A549 (cell line): ENCODE measurements at regions of chr4 and their contacts with region 1.

Region 1: DNA sequence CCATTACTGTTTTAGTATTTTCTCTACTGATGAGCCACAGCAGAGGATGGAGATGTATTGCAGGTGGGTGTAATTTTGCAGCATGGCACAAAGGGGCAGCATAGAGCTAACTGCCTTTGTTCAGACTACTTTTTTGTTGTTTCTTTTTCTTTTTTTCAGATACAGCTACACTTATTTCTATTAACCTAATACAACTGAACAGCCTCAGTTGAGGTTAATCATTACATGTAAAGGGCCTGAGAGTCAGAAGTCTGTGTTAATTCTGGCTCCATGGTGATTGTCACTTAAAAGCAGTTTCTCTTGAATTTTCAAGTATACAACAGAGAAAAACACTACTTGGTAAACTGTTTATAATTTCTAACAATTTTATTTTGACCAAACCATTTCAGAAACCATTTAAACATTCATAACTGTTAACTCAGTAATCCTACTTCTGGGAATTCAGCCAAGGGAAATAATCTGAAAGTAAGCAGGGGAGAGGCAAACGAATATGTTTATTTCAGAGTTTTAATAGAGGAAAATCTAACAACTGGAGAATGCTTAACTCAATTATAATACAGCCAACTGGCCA is 13.9 kb upstream of the PPEF2 start:
- DNase-seq: peak; percentile 44 to 47
- ATAC-seq: peak; percentile 88
- H3K4me3 ChIP-seq: no peak overlapping the region
- H3K27ac ChIP-seq: no peak overlapping the region
- H3K4me1 ChIP-seq: peaks cover 6% of the 10 kb centered on the region
- CTCF ChIP-seq: peak; percentile 72
- EP300 ChIP-seq: no peak
- POLR2A ChIP-seq: no peak
- RAD21 ChIP-seq: peak; percentile 48 to 62; a peak in 4 of 5 replicates

Region 2: DNA sequence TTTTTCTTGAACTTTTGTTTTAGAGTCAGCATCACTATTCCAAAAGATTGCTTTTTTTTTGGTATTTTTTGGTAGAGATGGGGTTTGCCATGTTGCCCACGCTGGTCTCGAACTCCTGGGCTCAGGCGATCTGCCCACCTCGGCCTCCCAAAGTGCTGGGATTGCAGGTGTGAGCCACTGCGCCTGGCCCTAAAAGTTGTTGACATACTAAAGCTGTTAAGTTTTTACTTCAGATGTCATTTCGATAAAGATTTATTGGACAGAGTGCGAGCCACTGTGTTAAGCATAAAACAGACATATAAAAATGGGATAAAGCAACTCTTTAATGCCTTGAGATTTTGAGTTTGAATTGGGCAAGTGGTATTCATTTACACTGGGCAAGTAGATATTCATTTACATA is 163.5 kb before region 1 on chr4:
- CTCF ChIA-PET with region 1: no interaction called
- POLR2A ChIA-PET with region 1: no interaction called
- DNase-seq: no peak
- ATAC-seq: no peak
- H3K4me3 ChIP-seq: no peak overlapping the region
- H3K27ac ChIP-seq: no peak overlapping the region
- H3K4me1 ChIP-seq: no peaks in the 10 kb centered on the region
- CTCF ChIP-seq: no peak
- EP300 ChIP-seq: no peak
- POLR2A ChIP-seq: no peak
- RAD21 ChIP-seq: no peak

Region 3: GRCh38 chr4:75895744-75896314 is 20.3 kb before region 1 on chr4:
- CTCF ChIA-PET with region 1: interaction called, 10 read pairs
- POLR2A ChIA-PET with region 1: no interaction called
- DNase-seq: peak; percentile 15 to 27
- ATAC-seq: peak; percentile 47 to 84; a peak in 4 of 6 replicates
- H3K4me3 ChIP-seq: no peak overlapping the region
- H3K27ac ChIP-seq: no peak overlapping the region
- H3K4me1 ChIP-seq: no peaks in the 10 kb centered on the region
- CTCF ChIP-seq: peak; percentile 57
- EP300 ChIP-seq: no peak
- POLR2A ChIP-seq: no peak
- RAD21 ChIP-seq: peak; percentile 29 to 46; a peak in 3 of 5 replicates

Region 4: GRCh38 chr4:75940692-75941253 is 24.6 kb after region 1 on chr4 and contains the start of gene NAAA:
- CTCF ChIA-PET with region 1: interaction called, 23 read pairs
- POLR2A ChIA-PET with region 1: no interaction called
- DNase-seq: peak; percentile 66 to 83
- ATAC-seq: peak; percentile 93
- H3K4me3 ChIP-seq: peak within 1 kb of the TSS; percentile 77
- H3K27ac ChIP-seq: peak within 1 kb of the TSS; percentile 88 to 92
- H3K4me1 ChIP-seq: peaks cover 6% of the 10 kb centered on the region; the same call in 1 of the 3 replicates
- CTCF ChIP-seq: peak; percentile 34
- EP300 ChIP-seq: no peak
- POLR2A ChIP-seq: peak; percentile 55
- RAD21 ChIP-seq: peak; percentile 5 to 14; a peak in 1 of 5 replicates
- polyA plus RNA-seq, gene NAAA: 29.3 and 31.8 TPM in 2 replicates

Region 5: DNA sequence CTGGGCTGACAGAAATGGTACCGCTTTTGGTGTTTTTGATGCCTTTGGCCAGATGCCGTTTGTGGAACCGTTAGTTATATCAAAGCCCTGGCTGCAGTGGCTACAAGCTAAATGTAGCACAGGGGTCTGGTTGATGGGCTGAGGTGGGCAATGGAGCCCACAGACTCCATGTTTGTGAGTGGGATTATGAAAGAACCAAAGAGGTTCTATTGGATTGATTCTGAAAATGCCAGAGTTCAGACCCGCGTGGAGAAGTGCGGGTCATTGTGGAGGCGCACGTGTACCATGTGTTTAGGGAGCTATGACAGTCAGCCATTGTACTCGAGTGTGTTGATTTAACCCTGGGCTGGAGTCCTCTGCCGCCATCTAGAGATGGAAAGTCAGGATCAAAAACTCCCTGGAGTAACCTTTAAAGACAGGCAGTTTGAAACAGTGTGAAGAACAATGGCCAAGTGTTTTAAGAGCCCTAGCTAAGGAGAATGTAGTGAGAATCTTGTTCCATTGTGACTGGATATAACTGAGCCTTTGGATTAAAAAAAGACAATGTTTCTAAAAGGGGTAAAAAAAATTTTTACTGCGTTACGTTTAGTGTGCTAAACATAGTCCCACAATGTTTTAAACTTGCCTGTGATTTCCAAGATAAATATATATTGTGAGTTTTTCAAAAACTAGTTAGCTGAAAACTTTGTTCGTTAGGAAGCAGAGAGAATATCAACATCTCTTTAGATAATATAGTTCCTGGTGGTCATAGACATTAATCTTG is 171.0 kb after region 1 on chr4:
- CTCF ChIA-PET with region 1: interaction called, 10 read pairs
- POLR2A ChIA-PET with region 1: no interaction called
- DNase-seq: peak; percentile 56 to 64
- ATAC-seq: peak; percentile 97 to 98
- H3K4me3 ChIP-seq: 0 out of 3 replicates have a peak overlapping the region, but pooled peaks have one; percentile 20
- H3K27ac ChIP-seq: peak overlapping the region in 1 of 2 experiments; percentile 48; a peak in 1 of 6 replicates
- H3K4me1 ChIP-seq: no peaks in the 10 kb centered on the region
- CTCF ChIP-seq: peak; percentile 48
- EP300 ChIP-seq: no peak
- POLR2A ChIP-seq: no peak
- RAD21 ChIP-seq: peak; percentile 53 to 68